ENCODE measurements at regions of chr11 and their contacts with region 1.

Region 1: DNA sequence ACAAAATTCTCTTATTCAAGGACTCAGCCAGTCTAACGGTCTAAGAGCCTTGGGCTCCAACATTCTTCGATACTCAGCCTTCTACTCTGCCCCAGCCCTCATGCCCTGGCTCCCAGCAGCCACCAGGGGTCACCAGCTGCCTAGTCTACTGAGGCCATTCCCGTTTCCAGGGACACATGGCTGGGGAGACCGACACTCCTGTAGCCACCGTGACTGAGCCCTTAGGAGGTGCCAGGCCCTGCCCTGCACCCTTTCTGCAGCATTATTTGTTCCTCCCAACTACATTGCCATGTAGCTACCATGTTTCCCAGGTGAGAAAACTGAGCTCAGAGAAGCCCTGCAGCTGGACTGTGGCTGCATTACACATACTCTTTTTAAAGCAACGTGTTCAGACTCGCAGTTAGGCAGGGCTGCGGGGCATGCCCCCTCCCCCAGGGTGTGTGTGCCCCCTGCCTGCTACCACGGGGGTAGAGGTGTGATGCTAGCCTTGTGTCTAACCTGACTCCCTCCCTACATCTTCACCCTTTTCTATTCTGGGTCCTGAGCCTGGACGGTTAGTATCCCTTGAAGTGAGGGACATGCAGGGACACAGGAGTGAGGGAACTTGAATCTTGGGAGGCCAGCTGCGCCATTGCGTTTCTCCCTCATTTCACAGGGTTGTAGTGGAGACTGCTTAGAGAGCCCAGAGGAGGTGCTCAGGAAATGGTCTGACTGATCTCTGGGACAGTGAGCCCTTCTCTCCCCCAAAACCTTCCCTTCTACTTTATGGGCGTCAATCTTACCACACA is 17.5 kb downstream of the ATG16L2 start:
- DNase-seq: peak; percentile 78 to 95
- H3K4me3 ChIP-seq: no peak overlapping the region
- CTCF ChIP-seq: peak in 1 of 3 donors; percentile 95
- POLR2A ChIP-seq: no peak

Region 2: DNA sequence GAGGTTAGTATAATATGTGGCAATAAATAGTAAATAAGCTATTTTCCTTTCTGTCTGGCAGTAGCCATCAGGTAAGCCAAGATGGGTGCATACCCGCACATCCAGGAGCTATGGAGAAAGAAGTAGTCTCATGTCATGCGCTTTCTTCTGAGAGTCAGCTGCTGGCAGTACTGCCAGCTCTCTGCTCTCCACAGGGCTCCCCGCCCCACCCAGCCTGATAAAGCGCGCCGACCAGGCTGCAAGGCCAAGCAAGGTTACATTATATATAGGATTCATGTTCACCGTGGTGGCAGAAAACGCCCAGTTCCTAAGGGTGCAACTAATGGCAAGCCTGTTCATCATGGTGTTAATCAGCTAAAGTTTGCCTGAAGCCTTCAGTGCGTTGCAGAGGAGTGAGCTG is 108.7 kb after region 1 on chr11:
- intact Hi-C with region 1: loop called (anchors 5 kb)
- DNase-seq: no peak
- H3K4me3 ChIP-seq: no peak overlapping the region
- CTCF ChIP-seq: no peak
- POLR2A ChIP-seq: no peak

Region 3: GRCh38 chr11:73177778-73178577 is 346.3 kb after region 1 on chr11:
- intact Hi-C with region 1: loop called (anchors 5 kb)
- DNase-seq: peak; percentile 76 to 96
- H3K4me3 ChIP-seq: no peak overlapping the region
- CTCF ChIP-seq: peak in 1 of 3 donors; percentile 24
- POLR2A ChIP-seq: no peak

Region 4: DNA sequence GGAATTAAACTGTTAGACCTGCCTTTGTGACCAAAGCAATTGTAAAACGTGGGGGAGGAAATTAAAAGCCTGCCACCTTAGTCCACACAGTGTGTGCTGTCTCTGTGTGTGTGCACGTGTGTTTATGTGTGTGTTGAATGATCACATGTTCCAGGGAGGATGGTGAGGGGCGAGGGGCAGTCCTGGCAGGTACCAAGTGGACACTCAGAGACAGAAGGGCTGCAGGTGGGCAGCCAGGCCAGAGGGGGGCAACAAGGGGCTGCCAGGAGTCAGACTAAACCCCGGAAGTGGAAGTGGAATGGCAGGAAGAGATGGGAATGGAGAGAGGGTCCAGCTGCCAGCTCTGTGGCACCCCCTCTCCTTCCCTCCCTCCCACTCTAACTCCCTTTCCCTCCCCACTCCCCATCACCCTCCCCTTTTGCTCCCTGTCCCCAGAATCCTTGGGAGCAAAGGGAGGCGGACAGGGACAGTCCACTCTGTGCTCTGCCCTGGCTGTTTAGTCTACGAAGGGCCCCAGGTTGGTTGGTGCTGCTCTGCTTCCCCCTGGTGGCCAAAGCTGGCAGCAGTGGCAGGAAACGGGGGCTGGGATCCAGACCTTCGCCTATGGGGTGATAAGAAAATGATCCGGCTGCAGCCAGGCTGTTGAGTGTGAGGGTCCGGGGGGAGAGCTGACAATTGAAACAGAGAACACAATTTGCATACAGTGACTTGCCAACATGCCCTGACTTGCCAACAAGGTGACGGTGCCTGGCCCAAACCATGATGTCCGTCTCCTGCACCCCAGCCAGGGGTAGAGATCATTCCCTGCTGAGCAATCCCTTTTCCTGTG is 410.8 kb after region 1 on chr11:
- intact Hi-C with region 1: loop called (anchors 2 kb)
- DNase-seq: peak; percentile 38 to 90
- H3K4me3 ChIP-seq: no peak overlapping the region
- CTCF ChIP-seq: peak in 1 of 3 donors; percentile 38
- POLR2A ChIP-seq: no peak

Measured in lower leg skin (tissue), 4 donors.